Common myeloid progenitor, CD34-positive (primary cell): ENCODE measurements at regions of chr2 and their contacts with region 1.

Region 1: GRCh38 chr2:37529830-37530415 is 141.5 kb downstream of the CDC42EP3 start:
- DNase-seq: no peak
- H3K4me3 ChIP-seq: no peak overlapping the region
- H3K27ac ChIP-seq: no peak overlapping the region
- H3K4me1 ChIP-seq: no peaks in the 10 kb centered on the region
- H3K27me3 ChIP-seq: no peaks in the 10 kb centered on the region

Region 2: DNA sequence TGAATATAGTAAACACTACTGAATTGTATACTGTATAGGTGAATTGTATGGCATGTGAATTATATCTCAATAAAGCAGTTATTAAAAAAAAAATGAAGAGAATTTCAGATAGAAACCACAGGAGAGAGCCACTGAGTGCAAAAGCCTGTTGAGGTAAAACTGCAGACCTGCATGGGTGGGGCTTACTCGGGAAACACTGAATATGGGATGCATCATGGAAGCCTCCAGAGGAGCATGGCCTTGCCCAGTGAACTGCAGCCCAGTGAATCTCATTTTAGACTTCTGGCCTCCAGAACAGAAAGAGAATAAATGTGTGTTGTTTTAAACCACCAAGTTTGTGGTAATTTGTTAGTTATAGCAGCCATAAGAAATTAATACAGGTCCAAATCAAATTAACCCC is 429.9 kb before region 1 on chr2:
- CTCF ChIA-PET with region 1: no interaction called
- POLR2A ChIA-PET with region 1: no interaction called
- DNase-seq: no peak
- H3K4me3 ChIP-seq: no peak overlapping the region
- H3K27ac ChIP-seq: no peak overlapping the region
- H3K4me1 ChIP-seq: no peaks in the 10 kb centered on the region
- H3K27me3 ChIP-seq: no peaks in the 10 kb centered on the region

Region 3: GRCh38 chr2:37543999-37544557 is 14.2 kb after region 1 on chr2:
- CTCF ChIA-PET with region 1: interaction called, 12 read pairs
- POLR2A ChIA-PET with region 1: no interaction called
- DNase-seq: no peak
- H3K4me3 ChIP-seq: no peak overlapping the region
- H3K27ac ChIP-seq: no peak overlapping the region
- H3K4me1 ChIP-seq: no peaks in the 10 kb centered on the region
- H3K27me3 ChIP-seq: no peaks in the 10 kb centered on the region